ENCODE measurements at regions of chr10 and their contacts with region 1.

Region 1: DNA sequence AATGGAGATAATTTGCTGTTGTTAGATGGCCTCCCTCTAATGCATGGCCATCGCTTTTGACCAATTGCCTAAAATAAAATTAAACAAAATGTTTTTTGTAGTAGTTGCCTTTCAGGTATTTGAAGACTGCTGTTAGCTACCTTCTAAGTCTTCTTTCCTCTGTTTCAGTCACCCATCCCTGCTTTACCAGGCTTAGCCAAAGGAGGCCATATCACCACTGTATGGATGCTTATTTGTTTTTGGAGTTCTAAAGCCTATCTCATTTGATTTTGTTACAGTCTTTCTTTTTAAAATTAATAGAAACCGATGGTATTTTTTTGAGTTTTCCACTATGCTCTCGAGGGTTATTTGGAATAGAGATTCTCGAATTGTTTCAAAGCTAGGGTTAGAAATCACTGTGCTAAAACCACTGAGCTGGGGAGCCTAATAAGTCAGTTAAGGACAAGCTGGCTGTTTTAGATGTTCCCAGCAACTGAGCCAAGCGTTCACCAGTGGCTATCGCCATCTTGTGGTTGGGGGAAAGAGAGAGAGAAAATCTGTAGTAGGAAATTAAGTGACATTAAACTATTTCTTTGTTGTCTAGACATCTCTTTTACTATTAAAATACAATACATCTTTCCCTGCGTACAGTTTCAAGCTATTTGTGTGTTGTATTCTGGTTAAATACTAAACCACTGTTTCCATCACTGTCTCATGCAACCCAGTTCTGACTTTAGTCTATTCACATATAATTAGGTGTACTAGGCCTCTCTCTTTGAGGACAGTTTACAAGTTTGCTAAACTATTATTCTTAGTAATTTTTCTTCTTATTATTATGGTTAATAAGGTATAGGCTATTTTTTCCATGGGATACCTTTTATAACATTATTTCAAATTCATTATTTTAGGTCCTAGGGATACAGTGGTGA is 52.2 kb downstream of the GPR158 start:
- DNase-seq: peak; percentile 43
- H3K4me3 ChIP-seq: no peak overlapping the region
- H3K27ac ChIP-seq: no peak overlapping the region
- H3K4me1 ChIP-seq: no peaks in the 10 kb centered on the region
- H3K27me3 ChIP-seq: peaks cover 3% of the 10 kb centered on the region
- CTCF ChIP-seq: peak; percentile 77 to 78

Region 2: DNA sequence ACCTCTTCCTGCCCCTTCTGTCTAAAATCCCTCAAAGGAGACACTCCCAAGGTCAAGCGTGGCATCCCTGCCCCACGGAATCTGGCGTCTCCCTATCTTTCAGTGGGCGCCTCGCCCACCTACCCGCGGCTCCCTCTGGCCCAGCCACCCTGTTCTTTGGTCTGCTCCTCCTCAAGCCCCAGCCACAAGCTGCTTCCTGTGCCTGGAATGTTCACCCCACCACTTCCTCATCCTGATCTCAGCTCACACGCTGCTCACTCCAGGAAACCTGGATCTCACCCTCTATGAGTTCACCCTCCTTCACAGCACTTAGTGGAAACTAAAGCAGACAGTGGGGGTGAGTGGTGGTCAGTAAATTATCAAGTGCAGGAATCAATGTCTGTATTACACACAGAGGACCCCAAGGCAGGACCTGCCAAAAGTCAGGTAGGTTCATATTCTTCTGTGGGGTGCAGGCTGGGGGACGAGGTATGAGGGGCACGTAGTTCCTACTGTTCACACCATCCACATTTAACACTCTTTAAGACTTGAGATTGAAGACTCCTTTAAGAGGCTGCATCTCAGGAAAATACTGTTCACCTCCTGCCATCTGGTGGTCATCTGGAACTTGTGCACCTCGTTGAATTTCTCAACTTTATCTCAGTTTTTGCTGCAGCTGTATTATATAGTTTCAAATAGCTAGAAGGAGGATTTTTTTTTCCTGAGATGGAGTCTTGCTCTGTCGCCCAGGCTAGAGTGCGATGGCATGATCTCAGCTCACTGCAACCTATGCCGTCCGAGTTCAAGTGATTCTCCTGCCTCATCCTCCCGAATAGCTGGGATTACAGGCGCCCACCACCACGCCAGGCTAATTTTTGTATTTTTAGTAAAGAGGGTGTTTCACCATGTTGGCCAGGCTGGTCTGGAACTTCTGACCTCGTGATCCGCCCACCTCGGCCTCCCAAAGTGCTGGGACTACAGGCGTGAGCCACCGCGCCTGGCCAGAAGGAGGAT is 670.0 kb before region 1 on chr10:
- CTCF ChIA-PET with region 1: no interaction called
- dilution Hi-C with region 1: no loop called
- in situ Hi-C with region 1: no loop called
- intact Hi-C with region 1: loop called (anchors 2 kb)
- DNase-seq: peak; percentile 46
- H3K4me3 ChIP-seq: no peak overlapping the region
- H3K27ac ChIP-seq: no peak overlapping the region
- H3K4me1 ChIP-seq: peaks cover 16% of the 10 kb centered on the region
- H3K27me3 ChIP-seq: no peaks in the 10 kb centered on the region
- CTCF ChIP-seq: peak; percentile 72 to 75

Region 3: GRCh38 chr10:25026463-25026862 is 200.6 kb before region 1 on chr10:
- CTCF ChIA-PET with region 1: no interaction called
- dilution Hi-C with region 1: no loop called
- in situ Hi-C with region 1: loop called in 1 of 2 experiments (anchors 10 kb)
- intact Hi-C with region 1: no loop called
- DNase-seq: no peak
- H3K4me3 ChIP-seq: no peak overlapping the region
- H3K27ac ChIP-seq: no peak overlapping the region
- H3K4me1 ChIP-seq: no peaks in the 10 kb centered on the region
- H3K27me3 ChIP-seq: no peaks in the 10 kb centered on the region
- CTCF ChIP-seq: peak; percentile 41 to 53

Region 4: DNA sequence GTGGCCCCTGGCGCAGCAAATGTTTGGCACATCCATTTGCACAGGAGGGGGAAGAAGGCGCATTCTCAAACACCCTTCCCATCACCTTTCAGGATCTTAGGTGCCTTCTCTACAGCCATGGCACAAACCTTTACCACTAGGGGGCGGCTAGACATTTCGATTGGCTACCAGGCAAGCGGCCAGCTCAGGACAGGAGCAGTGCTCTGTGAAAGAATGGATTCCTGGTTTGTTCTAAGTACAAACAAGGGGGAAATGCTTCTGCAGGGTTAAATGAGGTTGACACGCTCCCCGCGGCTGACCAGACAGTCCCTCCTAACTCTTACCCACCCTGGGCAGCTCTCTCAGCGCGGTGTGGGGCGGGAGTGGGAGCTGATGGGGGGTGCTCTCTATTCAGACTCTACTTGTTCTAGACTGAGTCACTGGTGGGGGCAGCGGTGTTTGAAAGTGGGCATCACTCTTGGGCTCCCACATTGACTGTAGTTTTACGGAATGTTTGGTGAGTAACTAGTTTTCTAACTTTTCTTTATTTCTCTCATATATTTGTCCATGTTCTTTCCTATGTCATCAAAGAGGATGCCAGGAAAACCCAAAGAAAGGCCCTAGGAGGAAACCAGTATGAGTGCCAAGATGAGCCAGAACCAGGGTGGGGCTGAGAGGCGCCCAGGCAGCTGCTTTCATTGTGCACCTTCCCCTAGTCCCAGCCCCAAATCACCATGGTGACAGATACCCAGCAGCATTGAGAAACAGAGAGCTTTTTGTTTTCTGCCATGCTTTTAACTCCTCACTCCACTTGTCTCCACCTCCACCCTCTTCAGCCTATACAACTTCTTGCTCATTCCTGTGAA is 113.6 kb before region 1 on chr10:
- CTCF ChIA-PET with region 1: interaction called, 3 read pairs
- dilution Hi-C with region 1: no loop called
- in situ Hi-C with region 1: loop called in 1 of 2 experiments (anchors 5 kb)
- intact Hi-C with region 1: loop called (anchors 1 kb)
- DNase-seq: peak; percentile 91
- H3K4me3 ChIP-seq: no peak overlapping the region
- H3K27ac ChIP-seq: peak overlapping the region; percentile 4
- H3K4me1 ChIP-seq: peaks cover 10% of the 10 kb centered on the region
- H3K27me3 ChIP-seq: no peaks in the 10 kb centered on the region
- CTCF ChIP-seq: peak; percentile 88 to 93

Region 5: GRCh38 chr10:25157650-25158049 is 69.4 kb before region 1 on chr10:
- CTCF ChIA-PET with region 1: interaction called, 15 read pairs
- dilution Hi-C with region 1: no loop called
- in situ Hi-C with region 1: no loop called
- intact Hi-C with region 1: no loop called
- DNase-seq: no peak
- H3K4me3 ChIP-seq: no peak overlapping the region
- H3K27ac ChIP-seq: no peak overlapping the region
- H3K4me1 ChIP-seq: no peaks in the 10 kb centered on the region
- H3K27me3 ChIP-seq: no peaks in the 10 kb centered on the region
- CTCF ChIP-seq: no peak

Region 6: DNA sequence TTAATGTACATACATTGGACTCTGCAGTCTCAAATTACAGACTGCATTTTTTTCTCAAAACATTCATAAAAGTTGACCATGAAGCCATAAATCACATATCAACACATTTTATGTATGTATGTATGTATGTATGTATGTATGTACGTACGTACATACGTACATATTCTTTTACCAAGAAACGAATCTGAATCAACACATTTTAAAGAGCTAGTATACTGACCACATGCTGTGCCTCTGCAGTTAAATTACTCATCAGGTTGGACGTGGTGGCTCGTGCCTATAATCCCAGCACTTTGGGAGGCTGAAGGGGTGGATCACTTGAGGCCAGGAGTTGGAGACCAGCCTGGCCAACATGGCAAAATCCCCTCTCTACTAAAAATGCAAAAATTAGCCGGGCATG is 53.6 kb after region 1 on chr10:
- CTCF ChIA-PET with region 1: no interaction called
- dilution Hi-C with region 1: no loop called
- in situ Hi-C with region 1: no loop called
- intact Hi-C with region 1: no loop called
- DNase-seq: no peak
- H3K4me3 ChIP-seq: no peak overlapping the region
- H3K27ac ChIP-seq: no peak overlapping the region
- H3K4me1 ChIP-seq: no peaks in the 10 kb centered on the region
- H3K27me3 ChIP-seq: no peaks in the 10 kb centered on the region
- CTCF ChIP-seq: no peak

Region 7: GRCh38 chr10:25682203-25682851 is 455.3 kb after region 1 on chr10:
- CTCF ChIA-PET with region 1: no interaction called
- dilution Hi-C with region 1: no loop called
- in situ Hi-C with region 1: no loop called
- intact Hi-C with region 1: loop called (anchors 5 kb)
- DNase-seq: peak; percentile 2
- H3K4me3 ChIP-seq: no peak overlapping the region
- H3K27ac ChIP-seq: no peak overlapping the region
- H3K4me1 ChIP-seq: no peaks in the 10 kb centered on the region
- H3K27me3 ChIP-seq: no peaks in the 10 kb centered on the region
- CTCF ChIP-seq: peak in 1 of 2 donors; percentile 51

Measured in mammary epithelial cell (primary cell).